MCF 10A (cell line): ENCODE measurements at regions of chrX and their contacts with region 1.

Region 1: DNA sequence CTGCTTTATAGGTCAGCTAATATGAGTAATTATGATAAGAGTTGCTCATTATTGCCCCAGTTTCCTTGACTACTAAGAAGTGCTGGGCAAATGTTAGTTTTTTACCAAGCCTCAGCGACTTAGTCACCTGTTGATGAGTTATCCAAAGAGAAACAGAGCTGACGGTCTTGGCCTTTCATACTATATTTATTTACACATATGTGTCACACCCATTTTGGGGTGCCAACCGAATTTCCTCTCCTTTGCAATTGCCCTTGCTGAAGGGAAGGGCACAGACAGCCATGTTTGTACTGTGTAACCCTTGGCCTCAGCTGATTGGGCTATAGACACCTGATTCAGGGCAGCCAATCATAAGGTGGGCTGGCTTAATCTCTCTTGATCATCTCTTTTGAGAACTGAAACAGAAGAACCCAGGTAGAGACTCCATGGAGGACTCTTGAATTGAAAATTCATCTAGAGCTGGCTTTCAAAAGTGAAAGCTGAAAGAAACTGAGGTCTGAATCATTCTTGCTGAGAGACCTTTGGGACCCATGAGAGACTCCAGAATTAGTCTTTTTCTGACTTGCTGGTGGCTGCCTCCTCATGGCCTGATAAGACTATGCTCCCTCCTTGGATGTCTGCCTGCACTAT is 111.7 kb upstream of the RPS6KA3 start:
- DNase-seq: peak; percentile 51
- H3K4me3 Mint-ChIP-seq: no peak overlapping the region
- H3K27ac Mint-ChIP-seq: peak overlapping the region; percentile 32
- H3K4me1 Mint-ChIP-seq: peaks cover 23% of the 10 kb centered on the region
- H3K27me3 Mint-ChIP-seq: peaks cover 75% of the 10 kb centered on the region
- CTCF ChIP-seq: no peak

Region 2: DNA sequence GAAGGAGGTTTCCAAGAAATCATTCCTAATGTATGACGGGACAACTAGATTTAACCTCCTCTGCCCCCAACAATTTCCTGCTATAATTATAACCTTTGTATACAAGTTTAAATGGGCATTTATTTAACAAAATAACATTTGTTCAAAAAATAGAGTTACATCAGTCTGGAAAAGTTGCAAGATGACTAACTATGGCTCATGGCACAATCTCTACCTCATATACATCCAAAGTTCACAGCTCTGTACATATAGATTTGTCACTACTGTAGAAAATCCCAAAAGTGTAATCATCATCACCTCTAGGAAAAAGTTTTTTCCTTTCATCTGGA is 107.9 kb before region 1 on chrX:
- CTCF ChIA-PET with region 1: no interaction called
- POLR2A ChIA-PET with region 1: interaction called, 7 read pairs
- intact Hi-C with region 1: loop called (anchors 2 kb)
- DNase-seq: peak; percentile 37
- H3K4me3 Mint-ChIP-seq: no peak overlapping the region
- H3K27ac Mint-ChIP-seq: no peak overlapping the region
- H3K4me1 Mint-ChIP-seq: peaks cover 10% of the 10 kb centered on the region
- H3K27me3 Mint-ChIP-seq: peaks cover 31% of the 10 kb centered on the region
- CTCF ChIP-seq: no peak